CD8-positive, alpha-beta memory T cell (primary cell): ENCODE measurements at regions of chr1 and their contacts with region 1.

Region 1: DNA sequence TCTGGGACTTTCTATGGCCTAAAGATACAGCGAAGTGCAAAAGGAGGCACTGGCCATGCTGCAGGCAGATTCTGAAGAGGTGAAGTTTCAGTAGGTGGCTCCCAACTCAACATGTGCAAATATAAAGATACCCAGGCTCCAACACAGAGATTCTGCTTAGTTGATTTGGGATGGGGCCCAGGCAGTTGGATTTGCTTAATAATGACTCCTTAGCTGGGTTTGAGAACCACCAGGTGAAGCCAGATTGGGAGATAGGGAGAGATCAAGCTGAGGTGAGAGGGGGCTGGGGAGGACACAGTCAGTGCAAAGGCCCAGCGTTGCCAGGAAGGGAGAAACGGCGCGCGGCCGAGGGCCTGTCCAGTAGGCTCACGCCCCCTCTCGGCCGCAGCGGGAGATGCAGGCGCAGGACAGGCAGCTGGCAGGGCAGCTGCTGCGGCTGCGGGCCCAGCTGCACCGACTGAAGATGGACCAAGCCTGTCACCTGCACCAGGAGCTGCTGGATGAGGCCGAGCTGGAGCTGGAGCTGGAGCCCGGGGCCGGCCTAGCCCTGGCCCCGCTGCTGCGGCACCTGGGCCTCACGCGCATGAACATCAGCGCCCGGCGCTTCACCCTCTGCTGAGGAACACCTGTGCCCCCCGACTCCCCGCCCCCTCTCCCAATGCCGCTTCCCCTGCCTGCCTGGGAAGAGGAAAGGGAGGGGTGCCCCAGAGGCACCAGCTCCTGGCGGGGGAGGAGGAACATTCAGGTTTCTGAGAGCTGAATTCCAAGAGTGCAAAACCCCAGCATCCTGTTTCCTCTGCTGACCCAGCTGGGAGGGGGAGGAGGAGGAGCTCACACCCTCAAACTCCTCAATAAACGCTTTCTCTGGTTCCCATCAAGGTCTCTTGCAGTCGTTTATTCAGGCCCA is 1.2 kb downstream of the FAM167B start:
- DNase-seq: peak; percentile 65 to 84 (median 68)
- H3K4me3 ChIP-seq: peak overlapping the region; percentile 60
- H3K4me3 Mint-ChIP-seq: peak overlapping the region; percentile 62 to 99 (median 85)
- H3K27ac ChIP-seq: no peak overlapping the region
- H3K27ac Mint-ChIP-seq: peak overlapping the region; percentile 72 to 100 (median 98)
- H3K4me1 ChIP-seq: peaks cover 48% of the 10 kb centered on the region
- H3K4me1 Mint-ChIP-seq: peaks cover 36 to 48% (median 40%) of the 10 kb centered on the region in 3 donors
- H3K27me3 ChIP-seq: no peaks in the 10 kb centered on the region
- H3K27me3 Mint-ChIP-seq: peaks cover 0 to 4% of the 10 kb centered on the region in 2 donors

Region 2: GRCh38 chr1:32179443-32180185 is 68.6 kb before region 1 on chr1 and contains the start of gene TXLNA:
- CTCF ChIA-PET with region 1: interaction called, 3 read pairs
- POLR2A ChIA-PET with region 1: interaction called, 17 read pairs
- DNase-seq: peak; percentile 83 to 91 (median 87)
- H3K4me3 ChIP-seq: peak within 1 kb of the TSS; percentile 74
- H3K4me3 Mint-ChIP-seq: peak within 1 kb of the TSS; percentile 86 to 99 (median 91)
- H3K27ac ChIP-seq: peak within 1 kb of the TSS; percentile 88
- H3K27ac Mint-ChIP-seq: peak within 1 kb of the TSS; percentile 91 to 98 (median 94)
- H3K4me1 ChIP-seq: peaks cover 28% of the 10 kb centered on the region
- H3K4me1 Mint-ChIP-seq: peaks cover 35 to 51% (median 45%) of the 10 kb centered on the region in 3 donors
- H3K27me3 ChIP-seq: no peaks in the 10 kb centered on the region
- H3K27me3 Mint-ChIP-seq: no peaks in the 10 kb centered on the region
- total RNA-seq, gene TXLNA: 99.0 to 99.9 TPM

Region 3: DNA sequence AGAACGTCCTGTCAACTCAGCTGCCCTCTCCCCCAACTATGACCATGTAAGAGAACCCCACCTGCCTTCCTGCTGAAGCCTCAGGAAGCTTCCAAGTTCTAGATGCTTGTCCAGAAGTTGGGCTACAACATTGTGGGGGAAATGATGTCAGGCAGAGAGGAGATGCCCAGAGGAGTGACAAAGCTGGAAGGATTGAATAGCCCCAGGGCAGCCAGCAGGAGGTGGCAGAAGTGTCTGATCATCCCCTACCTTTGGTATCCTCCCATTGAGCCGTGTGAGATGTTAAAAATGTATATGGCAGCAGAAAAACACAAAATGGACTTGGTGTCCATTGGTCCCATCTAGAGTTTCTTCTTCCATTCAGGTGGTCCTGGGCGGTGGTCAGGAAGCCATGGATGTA is 19.5 kb before region 1 on chr1:
- CTCF ChIA-PET with region 1: interaction called, 27 read pairs
- POLR2A ChIA-PET with region 1: interaction called, 4 read pairs
- DNase-seq: no peak
- H3K4me3 ChIP-seq: no peak overlapping the region
- H3K4me3 Mint-ChIP-seq: no peak overlapping the region
- H3K27ac ChIP-seq: no peak overlapping the region
- H3K27ac Mint-ChIP-seq: peak overlapping the region in 6 of 8 donors; percentile 6 to 54 (median 24)
- H3K4me1 ChIP-seq: peaks cover 7% of the 10 kb centered on the region
- H3K4me1 Mint-ChIP-seq: peaks cover 12 to 21% (median 20%) of the 10 kb centered on the region in 3 donors
- H3K27me3 ChIP-seq: no peaks in the 10 kb centered on the region
- H3K27me3 Mint-ChIP-seq: no peaks in the 10 kb centered on the region

Region 4: DNA sequence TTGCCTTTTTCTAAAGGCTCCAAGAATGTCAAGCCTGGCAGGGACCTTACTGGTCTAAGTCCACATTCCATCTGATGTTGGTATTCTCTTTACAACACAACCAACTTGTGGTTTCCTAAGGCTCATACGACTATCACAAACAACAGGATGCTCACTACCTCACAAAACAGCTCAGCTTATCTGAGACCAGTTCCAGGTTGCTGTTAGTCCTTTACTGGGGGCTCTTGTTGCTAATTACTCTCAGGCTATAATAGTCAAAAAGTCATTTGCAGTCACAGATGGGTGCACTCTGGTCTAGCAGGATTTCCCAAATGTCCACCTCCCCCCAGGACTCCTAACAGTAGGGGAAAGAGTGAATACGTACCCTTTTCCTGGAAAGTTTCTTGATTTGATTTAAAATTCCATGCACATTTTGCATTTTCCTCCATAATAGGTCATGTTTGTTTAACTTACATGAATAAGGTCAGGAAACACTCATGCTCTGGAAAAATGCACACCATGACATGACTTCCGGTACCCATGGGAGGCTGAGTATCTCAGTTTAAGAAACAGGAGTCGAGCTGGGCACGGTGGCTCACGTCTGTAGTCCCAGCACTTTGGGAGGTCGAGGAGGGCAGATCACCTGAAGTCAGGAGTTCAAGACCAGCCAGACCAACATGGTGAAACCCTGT is 18.8 kb after region 1 on chr1:
- CTCF ChIA-PET with region 1: interaction called, 181 read pairs
- POLR2A ChIA-PET with region 1: interaction called, 21 read pairs
- DNase-seq: peak in 1 of 5 donors; percentile 51
- H3K4me3 ChIP-seq: peak overlapping the region; percentile 45
- H3K4me3 Mint-ChIP-seq: peak overlapping the region; percentile 31 to 81 (median 78)
- H3K27ac ChIP-seq: no peak overlapping the region
- H3K27ac Mint-ChIP-seq: peak overlapping the region; percentile 84 to 98 (median 96)
- H3K4me1 ChIP-seq: peaks cover 74% of the 10 kb centered on the region
- H3K4me1 Mint-ChIP-seq: peaks cover 53 to 68% (median 62%) of the 10 kb centered on the region in 3 donors
- H3K27me3 ChIP-seq: no peaks in the 10 kb centered on the region
- H3K27me3 Mint-ChIP-seq: no peaks in the 10 kb centered on the region

Region 5: GRCh38 chr1:32273388-32274208 is 25.4 kb after region 1 on chr1:
- CTCF ChIA-PET with region 1: interaction called, 181 read pairs
- POLR2A ChIA-PET with region 1: interaction called, 11 read pairs
- DNase-seq: peak; percentile 74 to 92 (median 84)
- H3K4me3 ChIP-seq: peak overlapping the region; percentile 29
- H3K4me3 Mint-ChIP-seq: peak overlapping the region; percentile 31 to 87 (median 81)
- H3K27ac ChIP-seq: peak overlapping the region; percentile 12
- H3K27ac Mint-ChIP-seq: peak overlapping the region; percentile 85 to 96 (median 93)
- H3K4me1 ChIP-seq: peaks cover 66% of the 10 kb centered on the region
- H3K4me1 Mint-ChIP-seq: peaks cover 51 to 62% (median 54%) of the 10 kb centered on the region in 3 donors
- H3K27me3 ChIP-seq: no peaks in the 10 kb centered on the region
- H3K27me3 Mint-ChIP-seq: peaks cover 0 to 5% of the 10 kb centered on the region in 2 donors

Region 6: DNA sequence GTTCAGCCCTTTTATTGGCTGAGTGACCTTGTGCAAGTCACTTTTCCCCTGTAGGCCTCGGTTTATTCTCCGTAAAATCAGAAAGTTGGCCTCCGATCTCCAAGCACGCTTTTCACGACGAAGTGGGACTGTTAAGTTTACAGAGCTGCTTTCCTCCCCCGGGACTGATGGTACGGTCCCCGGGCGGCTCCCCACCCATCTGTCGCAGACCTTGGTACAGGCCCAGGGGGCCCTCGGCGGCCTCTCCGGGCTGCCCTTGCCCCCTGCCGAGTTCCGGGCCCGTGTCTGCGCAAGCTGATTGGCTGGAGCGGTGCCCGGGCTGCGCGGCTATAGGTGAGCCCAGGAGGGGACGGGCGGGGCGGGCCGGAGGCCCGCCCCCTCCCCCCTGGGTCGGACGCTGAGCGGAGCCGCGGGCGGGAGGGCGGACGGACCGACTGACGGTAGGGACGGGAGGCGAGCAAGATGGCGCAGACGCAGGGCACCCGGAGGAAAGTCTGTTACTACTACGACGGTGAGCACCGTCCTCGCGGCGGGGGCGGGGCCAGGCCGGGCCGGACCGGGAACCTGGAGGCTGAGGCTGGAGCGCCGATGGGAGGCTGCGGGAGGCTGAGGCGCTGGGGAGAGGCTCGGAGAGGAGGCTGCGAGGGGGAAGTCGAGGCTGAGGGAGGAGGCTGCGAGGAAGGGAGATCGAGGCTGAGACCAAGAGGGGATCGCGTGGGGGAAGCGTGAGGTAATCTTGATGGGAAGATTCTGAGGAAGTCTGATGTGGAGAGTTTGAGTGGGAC is 43.7 kb after region 1 on chr1 and contains the start of gene HDAC1:
- CTCF ChIA-PET with region 1: interaction called, 53 read pairs
- POLR2A ChIA-PET with region 1: interaction called, 20 read pairs
- DNase-seq: peak; percentile 95 to 98 (median 97)
- H3K4me3 ChIP-seq: peak within 1 kb of the TSS; percentile 76
- H3K4me3 Mint-ChIP-seq: peak within 1 kb of the TSS; percentile 96 to 100 (median 99)
- H3K27ac ChIP-seq: peak within 1 kb of the TSS; percentile 93
- H3K27ac Mint-ChIP-seq: peak within 1 kb of the TSS; percentile 95 to 99 (median 98)
- H3K4me1 ChIP-seq: peaks cover 59% of the 10 kb centered on the region
- H3K4me1 Mint-ChIP-seq: peaks cover 41 to 59% (median 55%) of the 10 kb centered on the region in 3 donors
- H3K27me3 ChIP-seq: no peaks in the 10 kb centered on the region
- H3K27me3 Mint-ChIP-seq: no peaks in the 10 kb centered on the region
- total RNA-seq, gene HDAC1: 164 to 172 TPM